ENCODE measurements at regions of chr2 and their contacts with region 1.

Region 1: GRCh38 chr2:118186110-118186857 is 98.0 kb downstream of the INSIG2 start:
- DNase-seq: peak; percentile 44
- ATAC-seq: peak; percentile 96
- H3K4me3 ChIP-seq: peak overlapping the region; percentile 75
- H3K27ac ChIP-seq: peak overlapping the region; percentile 39; the same call in 1 of the 2 replicates
- H3K4me1 ChIP-seq: peaks cover 3% of the 10 kb centered on the region
- H3K27me3 ChIP-seq: no peaks in the 10 kb centered on the region; a peak in 3 of 4 replicates
- CTCF ChIP-seq: no peak; a peak in 1 of 6 replicates
- EP300 ChIP-seq: no peak
- POLR2A ChIP-seq: peak; percentile 86
- RAD21 ChIP-seq: no peak

Region 2: DNA sequence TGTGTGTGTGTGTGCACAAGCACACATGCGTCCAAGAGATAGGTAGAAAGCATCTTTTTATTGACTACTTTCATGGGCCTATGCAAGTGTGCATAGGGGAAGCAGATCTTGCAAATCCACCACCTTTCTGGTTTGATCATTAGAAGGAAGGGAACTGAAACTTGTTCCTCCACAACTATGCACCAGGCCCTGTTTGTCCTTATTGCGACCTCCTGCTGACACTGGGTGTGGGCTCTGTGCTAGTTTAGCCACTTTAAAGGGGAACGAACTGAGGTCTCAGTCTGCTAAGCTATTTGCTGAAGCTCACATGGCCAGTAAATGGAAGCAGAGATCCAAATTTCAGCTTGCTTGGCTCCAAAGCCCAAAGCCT is 130.1 kb before region 1 on chr2:
- CTCF ChIA-PET with region 1: interaction called, 5 read pairs
- POLR2A ChIA-PET with region 1: interaction called, 3 read pairs
- RAD21 ChIA-PET with region 1: interaction called, 3 read pairs
- SMC1A ChIA-PET with region 1: interaction called, 4 read pairs
- in situ Hi-C with region 1: no loop called
- intact Hi-C with region 1: loop called (anchors 5 kb)
- DNase-seq: peak; percentile 86
- ATAC-seq: peak; percentile 92
- H3K4me3 ChIP-seq: peak overlapping the region; percentile 56
- H3K27ac ChIP-seq: peak overlapping the region; percentile 73
- H3K4me1 ChIP-seq: peaks cover 39% of the 10 kb centered on the region
- H3K27me3 ChIP-seq: no peaks in the 10 kb centered on the region
- CTCF ChIP-seq: no peak
- EP300 ChIP-seq: peak; percentile 72 to 90
- POLR2A ChIP-seq: no peak
- RAD21 ChIP-seq: no peak

Measured in GM12878 (cell line).